MCF 10A (cell line): ENCODE measurements at regions of chr15 and their contacts with region 1.

Region 1: GRCh38 chr15:31977812-31978661 is 52.3 kb upstream of the CHRNA7 start:
- DNase-seq: peak; percentile 49
- H3K4me3 Mint-ChIP-seq: no peak overlapping the region
- H3K27ac Mint-ChIP-seq: no peak overlapping the region
- H3K4me1 Mint-ChIP-seq: peaks cover 13% of the 10 kb centered on the region
- H3K27me3 Mint-ChIP-seq: peaks cover 46% of the 10 kb centered on the region
- CTCF ChIP-seq: peak; percentile 83

Region 2: DNA sequence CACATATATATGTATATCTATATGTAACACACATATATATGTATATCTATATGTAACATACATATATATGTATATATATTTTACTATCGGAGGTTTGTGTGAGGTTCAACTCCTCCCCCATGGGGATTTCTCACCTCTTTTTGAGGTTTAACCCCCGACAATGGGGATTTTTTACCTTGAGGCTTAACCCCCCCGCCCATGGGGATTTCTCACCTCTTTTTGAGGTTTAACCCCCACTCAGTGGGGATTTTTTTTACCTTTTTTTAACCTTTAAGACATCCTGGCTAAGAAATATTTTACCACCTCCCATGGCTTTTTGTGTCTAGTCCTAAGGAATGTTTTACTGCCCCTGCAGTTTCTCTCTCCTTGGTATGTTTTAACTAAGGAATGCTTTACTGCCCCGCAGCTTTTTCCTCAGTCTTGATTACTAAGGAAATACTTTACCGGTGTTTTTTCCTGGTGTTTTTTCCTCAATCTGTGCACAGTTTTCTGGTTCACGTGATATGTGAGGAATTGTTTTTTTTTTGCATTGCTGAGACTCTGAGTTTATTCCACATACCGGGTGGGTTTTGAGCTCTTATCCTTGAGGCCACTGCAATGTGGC is 466.2 kb before region 1 on chr15:
- CTCF ChIA-PET with region 1: interaction called, 11 read pairs
- POLR2A ChIA-PET with region 1: no interaction called
- intact Hi-C with region 1: no loop called
- DNase-seq: no peak
- H3K4me3 Mint-ChIP-seq: no peak overlapping the region
- H3K27ac Mint-ChIP-seq: no peak overlapping the region
- H3K4me1 Mint-ChIP-seq: no peaks in the 10 kb centered on the region
- H3K27me3 Mint-ChIP-seq: peaks cover 12% of the 10 kb centered on the region
- CTCF ChIP-seq: no peak

Region 3: DNA sequence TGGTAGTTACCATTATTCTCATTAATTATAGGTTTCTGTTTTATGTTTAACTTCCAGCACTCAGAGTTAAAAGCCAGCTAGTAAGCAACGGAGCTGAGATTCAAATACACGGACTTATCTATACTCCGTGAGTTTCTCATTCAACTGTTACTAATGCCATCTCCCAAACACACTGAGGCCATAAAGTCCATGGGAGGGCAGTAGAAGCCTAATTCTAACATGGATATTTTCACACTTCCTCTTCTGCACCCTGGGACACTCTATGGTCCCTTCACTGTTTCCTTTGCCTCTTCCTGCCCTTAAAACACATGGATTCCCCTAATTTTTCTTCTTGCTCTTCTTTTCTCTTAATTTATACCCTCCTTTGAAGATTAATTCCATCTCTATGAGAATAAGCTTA is 406.4 kb before region 1 on chr15:
- CTCF ChIA-PET with region 1: interaction called, 33 read pairs
- POLR2A ChIA-PET with region 1: no interaction called
- intact Hi-C with region 1: loop called (anchors 2 kb)
- DNase-seq: peak; percentile 41
- H3K4me3 Mint-ChIP-seq: no peak overlapping the region
- H3K27ac Mint-ChIP-seq: no peak overlapping the region
- H3K4me1 Mint-ChIP-seq: peaks cover 5% of the 10 kb centered on the region
- H3K27me3 Mint-ChIP-seq: no peaks in the 10 kb centered on the region
- CTCF ChIP-seq: peak; percentile 42

Region 4: GRCh38 chr15:31954374-31955172 is 23.5 kb before region 1 on chr15:
- CTCF ChIA-PET with region 1: interaction called, 17 read pairs
- POLR2A ChIA-PET with region 1: no interaction called
- intact Hi-C with region 1: no loop called
- DNase-seq: no peak
- H3K4me3 Mint-ChIP-seq: no peak overlapping the region
- H3K27ac Mint-ChIP-seq: no peak overlapping the region
- H3K4me1 Mint-ChIP-seq: no peaks in the 10 kb centered on the region
- H3K27me3 Mint-ChIP-seq: peaks cover 41% of the 10 kb centered on the region
- CTCF ChIP-seq: no peak

Region 5: DNA sequence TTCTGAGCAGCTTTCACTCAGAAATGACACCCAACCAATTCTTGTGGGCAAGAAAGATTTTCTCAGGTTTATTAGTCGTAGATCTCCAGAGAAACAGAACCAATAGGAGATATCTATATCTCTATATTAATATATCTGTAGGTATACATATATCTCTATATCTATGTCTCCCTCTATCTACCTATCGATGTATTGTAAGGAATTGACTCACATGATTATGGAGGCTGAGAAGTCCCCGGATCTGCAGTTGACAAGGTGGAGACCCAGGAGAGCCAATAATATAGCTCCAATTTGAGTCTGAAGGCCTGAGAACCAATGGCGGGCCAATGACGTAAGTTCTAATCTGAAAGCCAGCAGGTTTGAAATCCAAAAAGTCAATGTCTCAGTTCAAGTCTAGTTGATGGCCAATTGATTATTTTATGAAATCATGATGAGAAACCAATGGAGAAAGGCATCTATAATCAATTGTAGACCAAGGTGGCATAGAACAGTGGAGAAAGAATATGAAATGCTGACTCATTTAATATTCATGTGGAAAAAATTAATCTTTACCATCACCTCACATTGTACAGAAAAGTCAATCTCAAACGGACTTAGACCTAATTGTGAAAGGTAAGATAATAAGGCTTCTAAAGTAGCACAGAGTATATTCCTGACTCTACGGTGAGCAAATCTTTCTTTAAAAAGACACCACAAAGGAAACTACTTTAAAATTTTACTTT is 13.3 kb before region 1 on chr15:
- CTCF ChIA-PET with region 1: interaction called, 12 read pairs
- POLR2A ChIA-PET with region 1: no interaction called
- intact Hi-C with region 1: no loop called
- DNase-seq: no peak
- H3K4me3 Mint-ChIP-seq: no peak overlapping the region
- H3K27ac Mint-ChIP-seq: no peak overlapping the region
- H3K4me1 Mint-ChIP-seq: no peaks in the 10 kb centered on the region
- H3K27me3 Mint-ChIP-seq: peaks cover 34% of the 10 kb centered on the region
- CTCF ChIP-seq: no peak